Mucosa of descending colon (tissue), 3 donors: ENCODE measurements at regions of chr1 and their contacts with region 1.

Region 1: DNA sequence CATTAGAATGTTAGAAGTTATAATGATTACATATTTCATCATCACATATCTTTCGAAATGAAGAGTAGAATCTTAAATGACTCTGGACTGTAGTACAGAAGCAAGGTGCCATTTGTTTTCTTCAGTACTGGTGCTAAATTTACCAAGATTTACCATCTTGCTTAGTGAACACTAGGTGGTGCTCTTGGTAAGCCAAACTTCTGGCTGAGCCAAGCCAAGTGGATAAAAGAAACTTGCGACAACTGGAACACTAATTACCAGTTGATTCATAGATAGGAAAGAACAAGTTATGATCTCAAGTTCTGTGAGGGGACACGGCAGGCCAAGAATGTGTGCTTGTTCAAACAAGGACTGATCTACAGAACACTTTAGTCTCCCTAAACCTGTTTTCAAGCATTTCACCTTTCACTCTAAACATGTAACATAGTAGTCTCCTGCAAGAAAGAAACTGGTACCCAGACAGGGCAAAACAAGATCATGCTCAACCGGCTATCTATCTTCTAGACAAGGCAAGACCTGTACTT is 19.8 kb downstream of the SPRTN start:
- DNase-seq: peak in 1 of 3 donors; percentile 39
- ATAC-seq: peak; percentile 94
- H3K4me3 ChIP-seq: no peak overlapping the region
- H3K4me1 ChIP-seq: no peaks in the 10 kb centered on the region
- CTCF ChIP-seq: peak; percentile 45

Region 2: DNA sequence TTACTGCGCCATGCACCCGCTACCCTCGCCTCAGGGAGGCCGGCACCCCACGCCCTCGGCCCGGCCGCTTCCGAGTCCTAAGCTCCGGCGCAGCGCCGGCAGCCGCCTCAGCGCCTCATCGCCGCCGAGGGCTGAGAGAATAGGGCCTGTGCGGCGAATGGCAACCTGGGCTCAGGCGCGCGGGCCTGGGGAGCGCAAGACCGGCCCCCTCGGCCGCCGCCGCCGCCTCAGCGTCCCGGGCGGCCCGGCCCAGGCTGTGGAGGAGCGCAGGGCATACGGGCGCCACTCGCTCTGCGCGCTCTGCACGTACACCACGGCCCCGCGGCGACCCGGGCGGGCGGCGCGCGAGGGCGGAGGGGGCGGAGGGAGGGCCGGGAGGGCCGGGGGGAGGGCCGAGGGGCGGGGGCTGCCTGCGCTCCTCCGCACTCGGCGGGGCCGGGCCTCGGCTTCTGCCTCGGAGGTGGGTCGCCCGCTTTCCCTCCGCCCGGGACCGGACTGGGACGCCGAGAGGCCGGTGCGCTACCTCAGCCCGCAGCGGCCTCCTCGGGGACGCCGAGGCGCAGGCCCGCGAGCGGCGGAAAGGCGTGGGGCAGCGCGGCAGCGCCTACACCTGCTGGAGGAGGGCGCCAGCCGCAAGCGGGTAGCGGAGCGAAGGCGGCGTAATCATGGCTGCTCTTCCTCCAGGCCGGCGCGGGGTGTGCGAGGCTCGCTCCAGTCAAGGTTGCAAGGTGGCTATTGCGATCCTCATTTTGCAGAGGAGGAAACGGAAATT is 64.3 kb after region 1 on chr1 and contains the start of gene EGLN1:
- intact Hi-C with region 1: loop called in 1 of 2 experiments (anchors 5 kb)
- DNase-seq: peak; percentile 88 to 94 (median 92)
- ATAC-seq: peak; percentile 90
- H3K4me3 ChIP-seq: peak within 1 kb of the TSS; percentile 83
- H3K4me1 ChIP-seq: peaks cover 20% of the 10 kb centered on the region
- CTCF ChIP-seq: no peak
- total RNA-seq, gene EGLN1: 49.3 to 61.1 (median 55.0) TPM

Region 3: DNA sequence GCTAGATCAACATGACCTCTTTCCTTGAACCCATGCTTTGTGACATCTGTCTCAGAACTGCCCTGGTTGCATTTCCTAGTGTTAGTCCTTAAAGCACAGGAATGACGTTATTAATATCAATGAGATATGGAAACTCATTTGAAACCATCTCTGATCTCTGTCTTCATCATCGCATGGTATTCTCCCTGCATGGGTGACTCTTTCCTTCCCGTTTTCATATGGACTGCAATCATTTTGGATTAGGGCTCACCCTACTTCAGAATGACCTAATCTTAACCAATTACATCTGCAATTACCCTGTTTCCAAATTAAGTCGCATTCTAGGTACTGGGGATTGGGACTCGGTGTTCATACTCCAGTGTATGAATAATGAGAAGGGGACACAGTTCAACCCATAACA is 227.0 kb after region 1 on chr1:
- intact Hi-C with region 1: loop called (anchors 5 kb)
- DNase-seq: no peak
- ATAC-seq: no peak
- H3K4me3 ChIP-seq: no peak overlapping the region
- H3K4me1 ChIP-seq: no peaks in the 10 kb centered on the region
- CTCF ChIP-seq: no peak